K562 (cell line): ENCODE measurements at regions of chr3 and their contacts with region 1.

Region 1: GRCh38 chr3:143433787-143434378 is 314.3 kb downstream of the CHST2 start:
- DNase-seq: peak; percentile 19 to 58 (median 24)
- ATAC-seq: peak; percentile 75
- H3K4me3 ChIP-seq: no peak overlapping the region
- H3K27ac ChIP-seq: no peak overlapping the region
- H3K4me1 ChIP-seq: peaks cover 0 to 5% of the 10 kb centered on the region in 2 experiments; a peak in 1 of 5 replicates
- H3K27me3 ChIP-seq: no peaks in the 10 kb centered on the region
- CTCF ChIP-seq: peak; percentile 61 to 76 (median 69)
- EP300 ChIP-seq: no peak
- POLR2A ChIP-seq: no peak
- RAD21 ChIP-seq: peak; percentile 20 to 70; a peak in 3 of 4 replicates

Region 2: DNA sequence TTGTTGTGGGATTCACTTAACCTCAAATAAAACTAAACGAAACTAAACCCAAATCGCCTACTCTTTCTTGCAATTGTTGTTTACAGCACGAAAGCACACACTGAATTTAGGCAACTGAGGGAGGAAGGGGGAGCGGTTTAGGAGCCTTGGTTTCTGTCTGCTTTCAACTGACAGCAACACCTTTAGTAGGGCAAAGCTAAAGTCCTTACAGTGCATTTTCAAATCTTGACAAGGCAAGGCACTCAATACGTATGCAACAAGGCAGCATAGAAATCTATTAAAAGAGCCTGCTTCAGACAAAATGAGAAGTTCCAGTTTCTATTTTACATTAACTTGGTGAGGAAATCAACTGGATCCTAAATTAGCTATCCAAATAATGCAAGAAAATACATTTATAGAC is 139.7 kb before region 1 on chr3:
- CTCF ChIA-PET with region 1: no interaction called
- POLR2A ChIA-PET with region 1: no interaction called
- in situ Hi-C with region 1: no loop called
- intact Hi-C with region 1: no loop called
- DNase-seq: no peak
- ATAC-seq: no peak
- H3K4me3 ChIP-seq: no peak overlapping the region
- H3K27ac ChIP-seq: no peak overlapping the region
- H3K4me1 ChIP-seq: peaks cover 2 to 4% of the 10 kb centered on the region in 2 experiments; a peak in 2 of 5 replicates
- H3K27me3 ChIP-seq: no peaks in the 10 kb centered on the region
- CTCF ChIP-seq: no peak
- EP300 ChIP-seq: no peak
- POLR2A ChIP-seq: no peak
- RAD21 ChIP-seq: no peak

Region 3: GRCh38 chr3:143644370-143645089 is 210.6 kb after region 1 on chr3:
- CTCF ChIA-PET with region 1: interaction called, 4 read pairs
- POLR2A ChIA-PET with region 1: interaction called, 4 read pairs
- in situ Hi-C with region 1: no loop called
- intact Hi-C with region 1: loop called (anchors 1 kb)
- DNase-seq: peak; percentile 18 to 53 (median 34)
- ATAC-seq: peak; percentile 76; the same call in 2 of the 3 replicates
- H3K4me3 ChIP-seq: no peak overlapping the region
- H3K27ac ChIP-seq: no peak overlapping the region
- H3K4me1 ChIP-seq: no peaks in the 10 kb centered on the region
- H3K27me3 ChIP-seq: no peaks in the 10 kb centered on the region
- CTCF ChIP-seq: peak; percentile 42 to 61 (median 50); a peak in 5 of 6 replicates
- EP300 ChIP-seq: no peak
- POLR2A ChIP-seq: no peak
- RAD21 ChIP-seq: peak; percentile 52 to 74